ENCODE measurements at regions of chr1 and their contacts with region 1.

Region 1: DNA sequence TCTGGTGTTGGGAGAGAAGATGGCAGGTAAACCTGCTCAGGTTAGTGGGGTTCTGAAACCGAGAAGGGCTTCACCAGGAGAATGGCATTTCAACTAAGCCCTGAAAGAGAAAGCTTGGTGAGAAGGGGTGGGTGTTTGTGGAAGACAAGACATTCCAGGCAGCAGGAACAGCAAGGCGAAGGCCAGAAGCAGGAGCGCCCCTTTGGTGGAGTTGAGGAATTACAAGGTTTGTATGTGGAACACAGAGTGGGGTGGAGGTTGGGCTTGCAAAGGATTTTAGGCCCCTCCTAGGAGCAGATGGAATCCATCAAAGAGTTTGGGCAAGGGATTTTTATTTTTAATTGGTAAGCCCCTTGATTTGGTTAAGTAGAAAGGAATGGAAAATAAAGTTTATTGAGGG is 24.8 kb upstream of the ELOA start:
- DNase-seq: peak; percentile 59 to 75
- H3K4me3 ChIP-seq: no peak overlapping the region
- H3K27ac ChIP-seq: no peak overlapping the region
- H3K4me1 ChIP-seq: no peaks in the 10 kb centered on the region
- H3K27me3 ChIP-seq: no peaks in the 10 kb centered on the region
- CTCF ChIP-seq: peak; percentile 72 to 97 (median 84)
- EP300 ChIP-seq: peak in 1 of 2 experiments; percentile 15; a peak in 1 of 3 replicates
- POLR2A ChIP-seq: no peak
- RAD21 ChIP-seq: peak; percentile 46 to 61

Region 2: GRCh38 chr1:23699280-23700179 is 19.0 kb before region 1 on chr1:
- CTCF ChIA-PET with region 1: interaction called, 9 read pairs
- POLR2A ChIA-PET with region 1: interaction called, 90 read pairs
- DNase-seq: no peak
- H3K4me3 ChIP-seq: no peak overlapping the region
- H3K27ac ChIP-seq: no peak overlapping the region
- H3K4me1 ChIP-seq: peaks cover 0 to 5% (median under 1%) of the 10 kb centered on the region in 4 experiments; a peak in 2 of 7 replicates
- H3K27me3 ChIP-seq: no peaks in the 10 kb centered on the region
- CTCF ChIP-seq: no peak
- EP300 ChIP-seq: no peak
- POLR2A ChIP-seq: peak in 1 of 2 experiments; percentile 3; a peak in 1 of 3 replicates
- RAD21 ChIP-seq: no peak

Region 3: DNA sequence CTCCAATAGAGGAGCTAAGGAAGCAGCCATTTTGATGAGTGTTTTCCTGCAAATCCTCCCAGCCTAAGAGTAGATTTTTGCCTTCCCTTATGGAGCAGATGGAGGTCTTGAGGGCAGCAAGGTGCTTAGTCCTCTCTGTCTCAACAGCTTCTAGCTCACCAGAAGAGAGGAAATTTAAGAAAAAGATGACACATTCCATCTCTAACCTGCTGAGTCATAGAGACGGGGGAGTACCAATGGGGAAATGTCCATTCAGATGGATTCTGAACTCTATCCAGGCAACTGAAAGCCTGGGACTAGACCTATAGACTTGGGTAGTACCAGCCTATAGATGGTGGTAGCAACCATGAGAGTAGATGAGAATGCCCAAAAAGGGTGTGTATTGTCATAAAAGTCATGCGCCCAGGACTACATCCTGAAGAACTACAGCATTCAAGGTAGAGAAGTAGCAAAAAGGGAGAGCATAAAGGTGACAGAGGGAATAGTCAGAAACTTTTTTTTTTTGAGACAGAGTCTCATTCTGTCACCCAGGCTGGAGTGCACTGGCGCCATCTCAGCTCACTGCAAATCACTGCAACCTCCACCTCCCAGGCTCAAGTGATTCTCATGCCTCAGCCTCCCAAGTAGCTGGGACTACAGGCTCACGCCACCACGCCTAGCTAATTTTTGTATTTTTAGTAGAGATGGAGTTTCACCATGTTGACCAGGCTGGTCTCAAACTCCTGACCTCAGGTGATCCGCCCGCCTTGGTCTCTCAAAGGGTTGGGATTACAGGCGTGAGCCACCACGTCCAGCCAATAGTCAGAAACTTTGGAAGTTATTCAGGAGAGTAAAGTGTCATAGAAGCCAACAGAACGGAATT is 14.1 kb after region 1 on chr1:
- CTCF ChIA-PET with region 1: interaction called, 17 read pairs
- POLR2A ChIA-PET with region 1: no interaction called
- DNase-seq: no peak
- H3K4me3 ChIP-seq: no peak overlapping the region
- H3K27ac ChIP-seq: no peak overlapping the region
- H3K4me1 ChIP-seq: no peaks in the 10 kb centered on the region
- H3K27me3 ChIP-seq: no peaks in the 10 kb centered on the region
- CTCF ChIP-seq: no peak
- EP300 ChIP-seq: no peak
- POLR2A ChIP-seq: no peak
- RAD21 ChIP-seq: no peak

Measured in H1 (cell line).